Heart right ventricle (tissue), 16 donors: ENCODE measurements at regions of chr10 and their contacts with region 1.

Region 1: GRCh38 chr10:79242620-79243152 is 104.6 kb upstream of the PPIF start:
- DNase-seq: peak; percentile 59 to 68
- ATAC-seq: peak; percentile 4 to 55 (median 33)
- H3K4me3 ChIP-seq: peak overlapping the region; percentile 18 to 70 (median 54)
- H3K27ac ChIP-seq: peak overlapping the region; percentile 59 to 95 (median 88)
- H3K4me1 ChIP-seq: peaks cover 69 to 93% (median 88%) of the 10 kb centered on the region in 9 donors
- H3K27me3 ChIP-seq: no peaks in the 10 kb centered on the region
- CTCF ChIP-seq: no peak

Region 2: DNA sequence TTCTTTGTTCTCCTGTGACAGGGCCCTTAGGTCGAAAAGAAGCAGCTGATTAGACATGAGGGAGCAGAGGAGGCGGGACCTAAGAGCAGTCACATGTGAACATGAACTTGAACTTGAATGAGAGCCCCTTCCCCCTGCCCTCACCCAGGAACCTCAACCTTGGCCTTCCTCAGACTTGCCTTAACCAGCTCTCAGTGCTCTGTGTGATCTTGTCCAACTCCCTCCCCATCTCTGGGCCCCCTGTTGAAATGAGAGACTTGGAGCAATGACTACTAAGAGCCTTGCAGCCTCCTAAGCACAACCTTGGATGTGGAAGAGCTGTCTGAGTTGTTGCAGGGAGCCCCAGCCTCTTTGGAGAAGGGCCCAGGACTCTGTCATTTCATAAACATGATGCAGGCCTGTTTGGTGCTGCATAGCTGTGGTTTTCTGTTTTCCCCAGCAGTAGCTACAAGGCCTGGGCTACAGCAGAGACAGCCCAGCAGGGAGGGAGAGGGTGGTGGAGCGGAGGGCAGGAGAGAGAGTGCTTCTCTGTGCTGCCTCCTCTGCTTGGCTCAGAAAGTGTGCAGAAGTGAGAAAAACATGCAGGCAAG is 297.9 kb before region 1 on chr10:
- intact Hi-C with region 1: no loop called
- DNase-seq: peak in 1 of 2 donors; percentile 65
- ATAC-seq: peak; percentile 79 to 93 (median 88)
- H3K4me3 ChIP-seq: no peak overlapping the region
- H3K27ac ChIP-seq: peak overlapping the region in 7 of 10 donors; percentile 5 to 62 (median 50)
- H3K4me1 ChIP-seq: peaks cover 0 to 32% (median 12%) of the 10 kb centered on the region in 9 donors
- H3K27me3 ChIP-seq: no peaks in the 10 kb centered on the region
- CTCF ChIP-seq: no peak

Region 3: GRCh38 chr10:79266543-79267312 is 24.0 kb after region 1 on chr10:
- intact Hi-C with region 1: loop called in 1 of 10 experiments (anchors 2 kb)
- DNase-seq: peak; percentile 61 to 82
- ATAC-seq: peak; percentile 49 to 83 (median 71)
- H3K4me3 ChIP-seq: peak overlapping the region in 4 of 10 donors; percentile 2 to 25 (median 12)
- H3K27ac ChIP-seq: peak overlapping the region; percentile 61 to 91 (median 85)
- H3K4me1 ChIP-seq: peaks cover 52 to 100% (median 94%) of the 10 kb centered on the region in 9 donors
- H3K27me3 ChIP-seq: no peaks in the 10 kb centered on the region
- CTCF ChIP-seq: no peak

Region 4: GRCh38 chr10:79347226-79347893 is 104.7 kb after region 1 on chr10 and contains the start of gene PPIF:
- intact Hi-C with region 1: loop called in 1 of 10 experiments (anchors 10 kb)
- DNase-seq: peak; percentile 93 to 96
- ATAC-seq: peak; percentile 88 to 95 (median 90)
- H3K4me3 ChIP-seq: peak within 1 kb of the TSS; percentile 71 to 99 (median 82)
- H3K27ac ChIP-seq: peak within 1 kb of the TSS; percentile 90 to 98 (median 94)
- H3K4me1 ChIP-seq: peaks cover 3 to 65% (median 29%) of the 10 kb centered on the region in 9 donors
- H3K27me3 ChIP-seq: no peaks in the 10 kb centered on the region
- CTCF ChIP-seq: peak; percentile 94 to 99 (median 98)
- total RNA-seq, gene PPIF: 95.5 to 205 (median 148) TPM